KBM-7 (cell line): ENCODE measurements at regions of chr1 and their contacts with region 1.

Region 1: DNA sequence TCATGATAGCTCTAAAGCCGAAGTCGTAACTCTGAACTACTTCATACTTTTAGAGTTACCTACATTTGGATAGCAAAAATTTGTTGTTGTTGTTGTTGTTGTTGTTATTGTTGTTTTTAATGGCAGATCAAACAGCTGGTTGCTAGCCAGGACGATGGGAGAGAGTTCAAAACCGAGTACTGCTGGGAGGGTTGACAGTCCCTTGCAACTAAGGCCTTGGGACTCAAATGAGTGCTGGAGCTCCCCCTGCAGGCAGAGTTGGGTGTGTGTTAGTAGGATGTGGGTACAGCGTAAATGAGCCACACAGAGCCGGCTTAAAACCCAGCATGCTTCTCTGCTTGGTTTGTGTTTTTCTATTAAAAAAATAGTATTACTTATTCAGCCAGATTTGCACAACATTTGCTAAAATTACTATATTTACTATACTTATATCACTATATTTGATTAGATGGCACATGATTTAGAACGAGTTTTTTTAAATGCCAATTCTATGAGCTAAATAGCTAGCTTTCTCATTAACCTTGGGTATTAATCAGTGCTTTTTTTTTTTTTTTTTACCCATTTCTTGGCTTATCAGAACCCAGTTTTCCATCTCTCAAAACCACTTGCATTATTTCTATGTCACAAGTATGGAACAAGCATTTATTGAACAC is 129.2 kb upstream of the SYT6 start:
- DNase-seq: peak; percentile 81

Region 2: GRCh38 chr1:113978863-113979702 is 303.8 kb before region 1 on chr1 and contains the start of gene OLFML3:
- in situ Hi-C with region 1: loop called (anchors 25 kb)
- DNase-seq: peak; percentile 78

Region 3: GRCh38 chr1:114062477-114063099 is 220.3 kb before region 1 on chr1:
- in situ Hi-C with region 1: no loop called
- DNase-seq: no peak

Region 4: GRCh38 chr1:114250683-114251572 is 31.9 kb before region 1 on chr1:
- in situ Hi-C with region 1: no loop called
- DNase-seq: no peak